ENCODE measurements at regions of chr12 and their contacts with region 1.

Region 1: GRCh38 chr12:100437038-100437841 is 36.4 kb upstream of the NR1H4 start:
- DNase-seq: no peak
- ATAC-seq: no peak
- H3K4me3 ChIP-seq: no peak overlapping the region
- H3K27ac ChIP-seq: no peak overlapping the region
- H3K4me1 ChIP-seq: no peaks in the 10 kb centered on the region
- H3K27me3 ChIP-seq: no peaks in the 10 kb centered on the region
- CTCF ChIP-seq: no peak
- POLR2A ChIP-seq: no peak
- RAD21 ChIP-seq: no peak

Region 2: DNA sequence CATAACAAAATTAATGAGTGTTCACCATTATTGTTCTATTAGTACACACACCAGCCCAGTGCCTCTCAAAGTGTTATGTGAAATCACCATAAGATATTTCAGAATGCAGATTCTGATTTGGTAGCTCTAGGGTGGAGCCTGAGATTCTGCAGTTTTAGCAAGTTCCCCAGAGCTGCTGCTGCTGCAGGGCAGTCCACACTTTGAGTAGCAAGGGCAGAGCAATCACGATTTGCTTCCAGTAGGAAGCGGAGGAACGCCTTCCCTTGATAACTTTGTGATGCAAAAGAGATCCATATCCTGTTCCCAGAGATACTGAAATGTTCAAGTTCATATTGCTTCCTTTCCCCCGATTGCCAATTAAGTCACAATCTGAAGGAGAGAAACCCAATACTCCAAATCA is 22.5 kb before region 1 on chr12:
- CTCF ChIA-PET with region 1: no interaction called
- POLR2A ChIA-PET with region 1: no interaction called
- dilution Hi-C with region 1: no loop called
- in situ Hi-C with region 1: no loop called
- intact Hi-C with region 1: loop called (anchors 1 kb)
- DNase-seq: no peak
- ATAC-seq: no peak
- H3K4me3 ChIP-seq: no peak overlapping the region
- H3K27ac ChIP-seq: no peak overlapping the region
- H3K4me1 ChIP-seq: no peaks in the 10 kb centered on the region
- H3K27me3 ChIP-seq: no peaks in the 10 kb centered on the region
- CTCF ChIP-seq: no peak
- POLR2A ChIP-seq: no peak
- RAD21 ChIP-seq: no peak